ENCODE measurements at regions of chr14 and their contacts with region 1.

Region 1: DNA sequence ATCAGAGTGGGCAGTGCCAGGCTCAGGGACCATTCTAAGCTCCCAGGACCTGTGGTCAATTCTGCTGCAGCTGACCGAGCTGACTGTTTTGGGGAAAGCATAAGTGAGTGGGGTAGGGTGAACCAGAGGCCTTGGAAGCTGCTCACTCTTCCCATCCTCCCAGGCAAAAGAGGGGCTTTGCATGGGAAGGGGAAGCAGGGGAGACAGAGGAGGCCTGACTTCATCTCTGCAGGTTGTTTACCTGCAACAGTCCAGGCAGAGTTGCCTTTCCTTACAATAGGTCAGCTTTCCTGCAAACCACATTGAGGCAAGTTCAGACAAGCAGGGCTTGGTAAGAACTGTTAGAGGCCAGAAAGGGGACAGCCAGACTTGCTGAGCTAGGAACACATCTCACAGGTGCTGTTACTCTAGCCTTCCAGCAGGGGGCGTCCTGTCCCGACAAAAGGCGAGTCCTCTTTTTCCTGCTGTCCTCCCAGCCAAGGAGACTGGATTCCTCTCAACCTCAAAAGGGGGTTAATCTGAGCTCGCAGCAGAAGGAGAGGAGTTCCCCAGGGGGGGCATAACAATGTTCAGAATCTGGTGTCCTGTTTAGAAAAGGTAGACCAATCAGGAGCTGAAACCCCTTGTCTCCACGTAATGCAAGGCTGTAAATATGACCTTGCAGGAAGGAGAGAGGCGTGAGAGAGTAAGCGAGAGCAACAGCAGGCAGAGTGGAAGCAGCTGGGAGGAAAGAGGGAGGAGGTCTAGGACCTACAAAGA is 4.3 kb upstream of the DHRS2 start:
- DNase-seq: peak; percentile 76
- H3K4me3 ChIP-seq: no peak overlapping the region
- H3K27ac ChIP-seq: no peak overlapping the region
- H3K4me1 ChIP-seq: no peaks in the 10 kb centered on the region
- H3K27me3 ChIP-seq: no peaks in the 10 kb centered on the region
- CTCF ChIP-seq: peak; percentile 88 to 97 (median 94)
- POLR2A ChIP-seq: no peak

Region 2: GRCh38 chr14:23727566-23728335 is 95.9 kb after region 1 on chr14:
- intact Hi-C with region 1: loop called (anchors 1 kb)
- DNase-seq: no peak
- H3K4me3 ChIP-seq: no peak overlapping the region
- H3K27ac ChIP-seq: no peak overlapping the region
- H3K4me1 ChIP-seq: no peaks in the 10 kb centered on the region
- H3K27me3 ChIP-seq: no peaks in the 10 kb centered on the region
- CTCF ChIP-seq: peak in 3 of 4 experiments; percentile 6 to 35 (median 22)
- POLR2A ChIP-seq: no peak

Region 3: DNA sequence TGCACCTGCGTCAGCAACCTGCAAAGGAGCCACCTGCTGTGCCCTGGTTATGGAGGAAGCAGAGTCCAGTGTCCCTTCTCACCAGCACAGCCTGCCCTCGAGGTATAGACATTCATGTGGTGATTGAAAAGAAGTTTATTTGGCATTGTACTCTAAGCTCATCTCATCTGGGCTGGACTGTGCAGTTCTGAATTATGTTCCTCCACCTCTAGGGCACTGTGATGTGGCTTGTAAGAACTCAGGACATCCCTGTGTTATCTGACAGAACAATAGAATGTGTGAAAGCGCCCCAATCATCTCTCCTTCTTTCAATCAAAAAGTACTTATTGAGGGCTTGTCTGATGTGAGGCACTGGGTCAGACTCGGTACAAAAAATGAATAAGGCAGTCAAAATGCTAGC is 144.4 kb after region 1 on chr14:
- intact Hi-C with region 1: no loop called
- DNase-seq: no peak
- H3K4me3 ChIP-seq: no peak overlapping the region
- H3K27ac ChIP-seq: no peak overlapping the region
- H3K4me1 ChIP-seq: no peaks in the 10 kb centered on the region
- H3K27me3 ChIP-seq: no peaks in the 10 kb centered on the region
- CTCF ChIP-seq: no peak
- POLR2A ChIP-seq: no peak

Region 4: DNA sequence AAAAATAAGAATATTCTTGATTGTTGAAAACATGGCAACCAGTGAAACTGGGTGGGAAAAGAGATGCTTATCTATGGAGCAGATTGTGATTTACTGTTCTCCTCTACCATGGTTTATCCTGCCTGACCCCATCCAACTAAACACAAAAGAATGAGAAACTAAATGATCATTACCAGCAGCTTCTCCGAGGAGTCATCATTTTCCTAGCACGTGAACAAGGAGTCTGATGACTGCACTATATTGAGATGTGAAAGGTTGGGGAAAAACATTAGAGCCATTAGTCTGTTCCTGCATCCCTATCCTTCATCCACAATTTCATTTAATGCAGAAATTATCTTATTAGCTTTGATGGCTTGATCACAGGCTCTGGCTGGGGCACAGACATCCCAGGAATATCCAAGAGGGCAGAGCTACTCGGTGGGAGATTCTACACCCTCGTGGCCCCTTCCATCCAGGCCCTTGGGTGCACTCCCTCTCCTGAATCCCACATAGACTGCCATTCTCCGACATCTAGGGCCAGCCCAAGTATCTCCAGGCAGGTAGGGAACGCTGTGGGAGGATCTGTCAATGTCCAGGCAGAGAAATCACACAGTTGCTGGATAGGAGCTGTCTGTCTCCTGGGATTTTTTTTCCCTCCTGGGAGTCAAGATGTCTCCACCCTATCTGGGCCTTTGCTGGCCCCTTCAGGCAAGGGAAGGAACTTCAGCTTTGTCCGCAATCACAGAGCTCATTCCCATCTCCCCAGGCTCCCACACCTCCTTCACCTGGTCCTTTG is 278.4 kb after region 1 on chr14:
- intact Hi-C with region 1: loop called (anchors 2 kb)
- DNase-seq: no peak
- H3K4me3 ChIP-seq: no peak overlapping the region
- H3K27ac ChIP-seq: no peak overlapping the region
- H3K4me1 ChIP-seq: no peaks in the 10 kb centered on the region
- H3K27me3 ChIP-seq: no peaks in the 10 kb centered on the region
- CTCF ChIP-seq: peak; percentile 29 to 69 (median 57)
- POLR2A ChIP-seq: no peak

Region 5: GRCh38 chr14:23929822-23930294 is 298.0 kb after region 1 on chr14:
- intact Hi-C with region 1: loop called (anchors 5 kb)
- DNase-seq: peak; percentile 67
- H3K4me3 ChIP-seq: no peak overlapping the region
- H3K27ac ChIP-seq: no peak overlapping the region
- H3K4me1 ChIP-seq: no peaks in the 10 kb centered on the region
- H3K27me3 ChIP-seq: no peaks in the 10 kb centered on the region
- CTCF ChIP-seq: peak; percentile 73 to 91 (median 82)
- POLR2A ChIP-seq: no peak

Region 6: GRCh38 chr14:23953464-23954278 is 321.8 kb after region 1 on chr14 and contains the start of gene DHRS4:
- intact Hi-C with region 1: loop called (anchors 5 kb)
- DNase-seq: peak; percentile 77
- H3K4me3 ChIP-seq: peak within 1 kb of the TSS; percentile 64 to 68
- H3K27ac ChIP-seq: peak within 1 kb of the TSS; percentile 86 to 87
- H3K4me1 ChIP-seq: peaks cover 5% of the 10 kb centered on the region
- H3K27me3 ChIP-seq: no peaks in the 10 kb centered on the region
- CTCF ChIP-seq: peak; percentile 70 to 81 (median 78)
- POLR2A ChIP-seq: peak; percentile 38
- total RNA-seq, gene DHRS4: 37.0 to 40.6 TPM

Measured in prostate gland (tissue), 2 donors.